IMR-90 (cell line): ENCODE measurements at regions of chr2 and their contacts with region 1.

Region 1: GRCh38 chr2:10434886-10435819 is 13.0 kb downstream of the ODC1 start:
- DNase-seq: peak; percentile 52
- ATAC-seq: peak; percentile 93
- H3K4me3 ChIP-seq: no peak overlapping the region
- H3K27ac ChIP-seq: no peak overlapping the region
- H3K4me1 ChIP-seq: no peaks in the 10 kb centered on the region
- H3K27me3 ChIP-seq: no peaks in the 10 kb centered on the region
- CTCF ChIP-seq: peak; percentile 98
- POLR2A ChIP-seq: peak; percentile 58; the same call in 1 of the 2 replicates
- RAD21 ChIP-seq: peak; percentile 100

Region 2: DNA sequence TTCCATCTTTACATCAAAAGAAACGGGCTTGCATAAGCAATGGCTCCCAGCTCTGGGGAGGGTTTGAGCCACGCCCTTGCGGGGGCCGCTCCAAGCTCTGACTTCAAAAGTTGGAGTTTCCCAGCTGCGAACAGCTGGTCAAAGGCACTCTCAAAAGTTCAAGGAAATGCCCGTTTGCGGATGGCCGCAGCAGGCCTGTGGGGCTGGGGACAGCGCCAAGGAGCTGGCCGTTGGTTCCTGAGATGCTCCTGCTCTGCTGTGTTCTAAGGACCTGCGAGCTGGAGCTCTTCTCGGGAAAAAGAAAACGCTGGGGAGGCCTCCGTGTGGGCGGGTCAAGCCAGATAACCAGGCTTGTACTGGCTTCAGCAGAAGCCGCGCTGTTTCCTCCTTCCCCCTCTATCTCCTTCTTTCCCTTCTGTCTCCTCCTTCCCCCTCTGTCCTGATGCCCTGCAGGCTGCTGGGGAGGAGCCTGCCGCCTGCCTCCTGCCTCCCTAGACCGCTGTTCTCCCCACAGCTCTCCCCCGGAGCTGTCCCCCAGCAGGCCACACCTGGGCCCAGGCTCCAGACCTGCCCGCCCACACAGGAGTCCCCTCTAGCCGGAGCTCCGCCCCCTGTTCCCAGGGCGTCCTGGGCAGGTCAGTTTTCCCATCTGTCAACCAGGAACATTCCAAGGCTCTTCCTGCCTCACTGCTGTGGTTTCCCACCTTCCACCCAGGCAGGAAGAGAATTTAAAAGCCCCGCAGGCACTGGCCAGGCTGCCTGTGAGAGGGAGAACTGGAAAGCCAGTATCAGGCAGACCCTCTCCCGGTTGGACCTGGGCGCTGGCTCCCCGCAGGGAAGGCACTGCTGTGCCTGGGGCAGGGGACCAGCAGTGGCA is 377.7 kb before region 1 on chr2:
- CTCF ChIA-PET with region 1: interaction called, 11 read pairs
- POLR2A ChIA-PET with region 1: no interaction called
- dilution Hi-C with region 1: no loop called
- in situ Hi-C with region 1: no loop called
- intact Hi-C with region 1: no loop called
- DNase-seq: peak; percentile 88
- ATAC-seq: peak; percentile 85
- H3K4me3 ChIP-seq: no peak overlapping the region; the same call in 1 of the 2 replicates
- H3K27ac ChIP-seq: peak overlapping the region; percentile 66
- H3K4me1 ChIP-seq: peaks cover 14% of the 10 kb centered on the region; the same call in 1 of the 2 replicates
- H3K27me3 ChIP-seq: peaks cover 2% of the 10 kb centered on the region; the same call in 1 of the 2 replicates
- CTCF ChIP-seq: no peak
- POLR2A ChIP-seq: no peak
- RAD21 ChIP-seq: no peak

Region 3: GRCh38 chr2:10079234-10079869 is 355.8 kb before region 1 on chr2:
- CTCF ChIA-PET with region 1: interaction called, 3 read pairs
- POLR2A ChIA-PET with region 1: no interaction called
- dilution Hi-C with region 1: no loop called
- in situ Hi-C with region 1: loop called (anchors 5 kb)
- intact Hi-C with region 1: no loop called
- DNase-seq: peak; percentile 58
- ATAC-seq: peak; percentile 74
- H3K4me3 ChIP-seq: peak overlapping the region; percentile 52
- H3K27ac ChIP-seq: no peak overlapping the region
- H3K4me1 ChIP-seq: 0 out of 2 replicates have a peak, but pooled peaks cover 2% of the 10 kb centered on the region
- H3K27me3 ChIP-seq: peaks cover 64% of the 10 kb centered on the region
- CTCF ChIP-seq: no peak
- POLR2A ChIP-seq: no peak
- RAD21 ChIP-seq: no peak

Region 4: GRCh38 chr2:10103179-10103732 is 331.9 kb before region 1 on chr2:
- CTCF ChIA-PET with region 1: no interaction called
- POLR2A ChIA-PET with region 1: no interaction called
- dilution Hi-C with region 1: no loop called
- in situ Hi-C with region 1: no loop called
- intact Hi-C with region 1: no loop called
- DNase-seq: no peak
- ATAC-seq: no peak
- H3K4me3 ChIP-seq: no peak overlapping the region
- H3K27ac ChIP-seq: no peak overlapping the region
- H3K4me1 ChIP-seq: peaks cover 2% of the 10 kb centered on the region; the same call in 1 of the 2 replicates
- H3K27me3 ChIP-seq: no peaks in the 10 kb centered on the region; the same call in 1 of the 2 replicates
- CTCF ChIP-seq: no peak
- POLR2A ChIP-seq: no peak
- RAD21 ChIP-seq: no peak